ENCODE measurements at regions of chr17 and their contacts with region 1.

Region 1: GRCh38 chr17:64281962-64282727 is 19.1 kb upstream of the TEX2 start:
- DNase-seq: peak; percentile 70
- CTCF ChIP-seq: peak; percentile 71

Region 2: GRCh38 chr17:63919311-63919723 is 362.8 kb before region 1 on chr17:
- in situ Hi-C with region 1: loop called (anchors 25 kb)
- DNase-seq: peak; percentile 81
- CTCF ChIP-seq: peak; percentile 96

Region 3: DNA sequence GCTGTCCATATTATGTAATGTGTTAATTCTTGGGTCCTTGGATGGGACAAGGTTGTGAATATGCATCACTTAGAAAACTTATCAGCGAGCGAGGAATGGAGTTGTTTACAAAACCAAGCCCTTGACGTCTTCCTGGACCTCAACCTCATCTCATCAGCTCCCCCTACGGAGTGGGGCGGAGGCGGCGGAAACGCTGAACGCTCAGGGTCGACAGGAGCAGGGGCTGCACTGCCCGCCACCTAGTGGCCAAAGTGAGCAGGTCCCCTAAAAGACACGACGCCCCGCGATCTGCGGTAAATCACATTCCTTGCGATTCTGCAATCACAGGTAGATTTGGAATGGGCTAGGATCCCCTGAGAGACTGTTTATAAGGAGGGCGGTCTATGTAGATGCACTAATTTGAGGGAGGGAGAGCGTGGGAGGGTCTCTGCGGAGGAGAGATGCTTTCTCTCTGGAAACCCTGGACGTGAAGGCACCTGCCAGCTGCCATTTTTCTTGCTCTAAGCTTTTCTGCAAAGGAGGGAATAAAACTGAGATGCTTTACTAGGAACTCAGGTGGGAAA is 256.3 kb before region 1 on chr17:
- in situ Hi-C with region 1: loop called (anchors 10 kb)
- DNase-seq: peak; percentile 66
- CTCF ChIP-seq: peak; percentile 95

Region 4: GRCh38 chr17:64155751-64156544 is 126.2 kb before region 1 on chr17:
- in situ Hi-C with region 1: loop called (anchors 10 kb)
- DNase-seq: no peak
- CTCF ChIP-seq: no peak

Measured in GM13977 (cell line).